ENCODE measurements at regions of chr21 and their contacts with region 1.

Region 1: DNA sequence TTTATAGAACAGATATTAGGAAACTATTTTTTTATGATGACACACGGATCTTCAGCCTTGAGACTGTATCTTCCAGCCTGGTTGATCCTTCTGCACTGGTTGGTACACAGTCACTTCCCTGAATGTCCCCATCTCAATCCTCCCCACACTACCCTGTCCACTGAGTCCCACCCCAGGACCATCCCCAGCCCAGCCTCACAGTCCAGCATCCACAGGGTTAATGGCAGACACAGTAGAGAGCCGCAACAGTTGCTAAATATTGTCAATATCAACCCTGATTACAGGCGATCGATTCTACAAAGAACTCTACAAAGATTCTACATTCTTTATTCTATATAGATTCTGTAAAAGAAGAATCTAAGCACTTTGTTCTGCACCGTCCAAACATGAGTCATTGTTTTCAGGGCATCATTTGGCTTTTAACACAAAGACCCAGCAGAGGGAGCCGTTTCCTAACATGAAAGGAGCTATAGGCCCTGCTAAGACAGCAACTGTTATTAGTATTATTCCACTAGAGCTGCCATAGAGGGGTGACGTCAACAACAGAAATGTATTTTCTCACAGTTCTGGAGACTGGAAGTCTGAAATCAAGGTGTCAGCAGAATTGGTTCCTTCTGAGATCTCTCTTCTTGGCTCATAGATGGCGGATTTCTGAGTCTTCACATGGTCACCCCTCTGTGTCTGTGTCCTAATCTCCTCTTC is 30.1 kb upstream of the IFNAR2 start:
- DNase-seq: peak; percentile 91
- ATAC-seq: peak; percentile 86
- H3K4me3 Mint-ChIP-seq: no peak overlapping the region
- H3K27ac Mint-ChIP-seq: no peak overlapping the region
- H3K4me1 Mint-ChIP-seq: peaks cover 36% of the 10 kb centered on the region
- H3K27me3 Mint-ChIP-seq: no peaks in the 10 kb centered on the region
- CTCF ChIP-seq: peak; percentile 81

Region 2: GRCh38 chr21:32794644-32795079 is 405.0 kb before region 1 on chr21:
- CTCF ChIA-PET with region 1: no interaction called
- POLR2A ChIA-PET with region 1: no interaction called
- intact Hi-C with region 1: no loop called
- DNase-seq: no peak
- ATAC-seq: no peak
- H3K4me3 Mint-ChIP-seq: no peak overlapping the region
- H3K27ac Mint-ChIP-seq: no peak overlapping the region
- H3K4me1 Mint-ChIP-seq: no peaks in the 10 kb centered on the region
- H3K27me3 Mint-ChIP-seq: no peaks in the 10 kb centered on the region
- CTCF ChIP-seq: no peak

Region 3: DNA sequence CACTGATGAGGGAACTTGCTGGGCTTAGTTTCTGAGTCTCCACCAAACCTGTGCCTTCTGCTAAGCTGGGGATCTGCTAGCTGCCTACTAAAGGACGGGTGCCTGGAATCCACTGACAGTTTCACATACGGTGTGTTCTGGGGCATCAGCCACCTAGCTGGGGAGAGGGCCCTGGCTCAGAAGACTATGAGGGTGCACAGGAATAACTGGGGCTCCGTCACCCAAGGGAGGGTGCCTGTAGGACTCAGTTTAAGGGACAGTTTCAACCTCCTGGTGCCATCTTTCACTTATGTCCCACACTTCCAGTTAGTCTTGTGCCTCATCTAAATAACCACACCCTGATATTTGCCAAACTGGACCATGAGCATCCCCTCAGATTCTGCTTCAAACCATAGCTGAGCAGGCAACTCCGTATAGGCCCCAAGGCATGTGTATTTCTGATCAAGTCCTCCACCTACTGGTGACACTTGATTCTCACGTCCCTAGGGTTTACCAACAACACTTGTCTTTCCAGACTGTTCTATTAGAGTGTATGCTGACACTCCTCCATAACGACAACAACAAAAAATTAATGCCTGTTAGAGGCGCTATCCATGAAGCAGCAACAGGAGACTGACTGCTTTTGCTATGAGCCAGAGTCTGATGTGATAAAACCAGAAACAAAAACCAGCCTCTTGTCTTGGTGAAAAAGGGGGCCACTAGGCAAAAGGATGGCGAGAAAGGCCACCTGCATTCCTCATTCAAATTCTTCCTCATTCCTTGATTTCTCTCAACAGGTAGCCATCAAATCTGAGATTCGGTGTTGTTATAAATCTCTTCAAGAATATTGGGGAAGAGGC is 373.1 kb before region 1 on chr21:
- CTCF ChIA-PET with region 1: interaction called, 10 read pairs
- POLR2A ChIA-PET with region 1: no interaction called
- intact Hi-C with region 1: loop called (anchors 5 kb)
- DNase-seq: peak; percentile 61
- ATAC-seq: peak; percentile 90
- H3K4me3 Mint-ChIP-seq: no peak overlapping the region
- H3K27ac Mint-ChIP-seq: no peak overlapping the region
- H3K4me1 Mint-ChIP-seq: no peaks in the 10 kb centered on the region
- H3K27me3 Mint-ChIP-seq: peaks cover 3% of the 10 kb centered on the region
- CTCF ChIP-seq: peak; percentile 69

Region 4: GRCh38 chr21:32940079-32941014 is 259.3 kb before region 1 on chr21:
- CTCF ChIA-PET with region 1: interaction called, 30 read pairs
- POLR2A ChIA-PET with region 1: no interaction called
- intact Hi-C with region 1: no loop called
- DNase-seq: peak; percentile 52
- ATAC-seq: peak; percentile 51
- H3K4me3 Mint-ChIP-seq: no peak overlapping the region
- H3K27ac Mint-ChIP-seq: no peak overlapping the region
- H3K4me1 Mint-ChIP-seq: peaks cover 10% of the 10 kb centered on the region
- H3K27me3 Mint-ChIP-seq: no peaks in the 10 kb centered on the region
- CTCF ChIP-seq: peak; percentile 90

Region 5: DNA sequence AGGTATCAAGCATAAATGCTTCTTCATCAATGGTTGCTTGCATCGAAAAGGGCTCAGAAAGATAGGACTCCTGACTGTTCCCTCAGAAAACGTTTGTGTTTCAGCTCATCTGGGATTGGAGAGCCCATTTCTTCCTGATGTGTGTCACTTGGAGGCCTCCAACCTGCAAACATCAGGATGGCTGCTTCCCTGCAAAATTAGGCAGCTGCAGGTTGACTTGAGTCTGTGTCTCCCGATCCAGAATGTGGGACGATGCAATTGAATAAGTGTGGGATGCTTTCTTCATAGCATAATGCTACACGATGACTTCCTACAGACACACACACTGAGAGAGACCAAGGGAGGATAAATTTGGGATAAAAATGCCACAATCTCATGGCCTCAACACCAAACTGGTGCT is 87.5 kb before region 1 on chr21:
- CTCF ChIA-PET with region 1: no interaction called
- POLR2A ChIA-PET with region 1: no interaction called
- intact Hi-C with region 1: no loop called
- DNase-seq: no peak
- ATAC-seq: no peak
- H3K4me3 Mint-ChIP-seq: no peak overlapping the region
- H3K27ac Mint-ChIP-seq: no peak overlapping the region
- H3K4me1 Mint-ChIP-seq: peaks cover 20% of the 10 kb centered on the region
- H3K27me3 Mint-ChIP-seq: peaks cover 28% of the 10 kb centered on the region
- CTCF ChIP-seq: no peak

Region 6: DNA sequence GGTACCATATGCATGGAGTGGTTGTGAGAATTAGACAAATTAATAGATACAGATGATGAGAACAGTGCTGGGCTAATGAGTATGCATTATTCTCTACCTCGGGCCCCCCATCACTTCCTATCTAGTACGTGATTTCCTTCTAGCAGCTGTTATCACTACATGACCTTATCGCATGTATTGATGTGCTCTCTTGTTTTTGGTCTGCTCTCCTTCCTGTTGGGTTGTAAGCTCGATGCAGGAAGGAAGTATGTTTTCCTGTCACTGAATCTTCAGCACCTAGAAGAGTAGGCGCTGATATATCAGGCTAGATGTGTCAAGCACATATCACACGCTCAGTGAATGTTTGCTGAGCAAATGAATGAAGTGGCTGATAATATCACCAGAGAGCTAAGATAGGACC is 13.8 kb before region 1 on chr21:
- CTCF ChIA-PET with region 1: interaction called, 14 read pairs
- POLR2A ChIA-PET with region 1: no interaction called
- intact Hi-C with region 1: no loop called
- DNase-seq: peak; percentile 31
- ATAC-seq: peak; percentile 90
- H3K4me3 Mint-ChIP-seq: peak overlapping the region; percentile 7
- H3K27ac Mint-ChIP-seq: peak overlapping the region; percentile 83
- H3K4me1 Mint-ChIP-seq: peaks cover 19% of the 10 kb centered on the region
- H3K27me3 Mint-ChIP-seq: no peaks in the 10 kb centered on the region
- CTCF ChIP-seq: no peak

Region 7: DNA sequence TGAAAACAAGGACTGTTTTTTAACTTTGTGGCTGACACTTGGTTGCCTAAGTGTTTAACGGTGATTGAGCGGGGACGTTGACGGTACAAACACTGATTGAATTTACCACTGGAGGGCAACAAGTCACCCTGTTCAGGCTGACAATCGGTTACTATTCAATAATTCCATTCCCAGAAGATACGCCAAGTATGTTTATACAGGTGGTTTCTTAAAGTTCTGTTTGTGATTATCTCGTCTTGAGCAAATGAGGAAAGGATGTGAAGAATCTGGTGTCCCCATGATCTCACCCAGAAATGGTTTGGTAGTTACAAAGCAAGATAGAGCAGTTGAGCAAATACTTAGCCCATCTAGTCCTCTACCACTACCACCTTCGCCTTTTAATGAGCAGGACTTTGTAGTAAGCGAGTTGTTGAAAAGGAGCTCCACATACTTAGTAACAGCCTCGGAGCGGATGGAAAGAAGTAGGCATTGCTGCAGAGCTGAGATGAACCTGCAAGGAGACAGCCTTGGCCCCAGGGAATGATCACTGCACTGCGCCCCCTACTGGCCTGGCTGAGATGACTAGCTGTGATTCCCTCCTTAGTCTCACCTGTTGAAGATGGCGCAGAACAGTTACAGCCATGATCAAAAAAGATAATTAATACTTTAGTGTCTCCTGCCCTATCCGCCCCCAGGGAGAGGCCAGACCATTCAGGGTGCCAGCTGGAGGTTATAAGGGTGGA is 161.4 kb after region 1 on chr21:
- CTCF ChIA-PET with region 1: interaction called, 45 read pairs
- POLR2A ChIA-PET with region 1: no interaction called
- intact Hi-C with region 1: loop called (anchors 5 kb)
- DNase-seq: peak; percentile 92
- ATAC-seq: peak; percentile 82
- H3K4me3 Mint-ChIP-seq: peak overlapping the region; percentile 73
- H3K27ac Mint-ChIP-seq: peak overlapping the region; percentile 69
- H3K4me1 Mint-ChIP-seq: peaks cover 17% of the 10 kb centered on the region
- H3K27me3 Mint-ChIP-seq: no peaks in the 10 kb centered on the region
- CTCF ChIP-seq: peak; percentile 97

Region 8: DNA sequence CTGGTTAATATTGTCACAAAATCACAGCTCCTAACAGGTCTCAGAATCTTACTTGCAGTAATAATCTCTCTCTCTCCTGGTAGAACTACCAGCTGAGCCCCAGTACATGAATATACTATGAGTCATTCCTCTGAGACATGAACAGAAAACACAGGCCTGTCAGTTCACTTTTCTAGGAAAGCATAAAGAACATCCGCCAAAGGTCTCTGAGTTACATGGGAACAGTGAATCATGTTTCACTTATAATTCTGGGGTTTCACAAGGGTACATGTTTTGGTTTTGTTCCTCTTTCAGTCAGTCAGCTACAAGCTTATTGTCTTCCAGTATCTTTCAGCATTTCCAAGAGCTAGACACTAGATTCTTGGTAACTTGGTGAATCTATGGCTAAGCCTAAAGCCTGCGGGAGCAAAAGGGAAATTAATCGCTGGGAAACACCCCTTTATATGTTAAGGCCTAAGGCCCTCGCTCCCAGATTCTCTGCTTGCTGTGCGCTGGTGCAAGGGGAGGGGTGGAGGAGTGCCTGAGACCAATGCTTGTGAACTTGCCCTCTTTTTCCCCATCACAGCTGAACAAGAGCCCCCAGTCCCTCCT is 235.2 kb after region 1 on chr21:
- CTCF ChIA-PET with region 1: interaction called, 10 read pairs
- POLR2A ChIA-PET with region 1: no interaction called
- intact Hi-C with region 1: no loop called
- DNase-seq: peak; percentile 51
- ATAC-seq: peak; percentile 94
- H3K4me3 Mint-ChIP-seq: peak overlapping the region; percentile 1
- H3K27ac Mint-ChIP-seq: peak overlapping the region; percentile 77
- H3K4me1 Mint-ChIP-seq: peaks cover 26% of the 10 kb centered on the region
- H3K27me3 Mint-ChIP-seq: no peaks in the 10 kb centered on the region
- CTCF ChIP-seq: no peak

Measured in activated CD8-positive, alpha-beta T cell treated with anti-CD3 and anti-CD28 coated beads for 36 hours (primary cell).